ENCODE measurements at regions of chr12 and their contacts with region 1.

Region 1: GRCh38 chr12:124347716-124348357 is 52.9 kb downstream of the RFLNA start:
- DNase-seq: peak in 1 of 2 experiments; percentile 74
- H3K4me3 ChIP-seq: no peak overlapping the region
- H3K27ac ChIP-seq: no peak overlapping the region
- H3K4me1 ChIP-seq: no peaks in the 10 kb centered on the region
- H3K27me3 ChIP-seq: no peaks in the 10 kb centered on the region
- CTCF ChIP-seq: peak in 2 of 3 experiments; percentile 49 to 66; a peak in 2 of 4 replicates
- EP300 ChIP-seq: no peak
- POLR2A ChIP-seq: no peak
- RAD21 ChIP-seq: peak; percentile 47 to 49

Region 2: DNA sequence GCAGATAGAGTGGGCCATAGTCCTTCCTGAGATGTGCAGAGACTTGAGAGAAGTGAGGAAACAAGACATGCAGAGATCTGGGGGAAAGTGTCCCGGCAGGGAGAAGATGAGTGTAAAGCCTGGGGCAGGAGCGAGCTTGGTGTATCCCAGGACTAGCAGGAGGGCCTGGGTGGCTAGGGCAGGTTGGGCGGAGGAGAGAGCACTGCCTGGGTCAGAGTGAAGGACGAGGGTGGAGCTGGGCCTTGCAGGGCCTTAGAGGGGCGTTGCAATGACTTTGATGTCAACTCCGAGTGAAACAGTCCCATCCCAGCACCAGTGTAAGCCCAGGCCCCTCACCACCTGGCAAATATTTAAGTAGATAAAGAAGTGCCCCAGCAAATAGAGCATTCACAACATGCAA is 77.2 kb before region 1 on chr12:
- CTCF ChIA-PET with region 1: no interaction called
- POLR2A ChIA-PET with region 1: no interaction called
- DNase-seq: no peak
- H3K4me3 ChIP-seq: no peak overlapping the region
- H3K27ac ChIP-seq: no peak overlapping the region
- H3K4me1 ChIP-seq: 0 out of 7 replicates have a peak, but pooled peaks cover 0 to 3% (median 0%) of the 10 kb centered on the region in 4 experiments
- H3K27me3 ChIP-seq: no peaks in the 10 kb centered on the region
- CTCF ChIP-seq: no peak
- EP300 ChIP-seq: no peak
- POLR2A ChIP-seq: no peak
- RAD21 ChIP-seq: no peak

Region 3: DNA sequence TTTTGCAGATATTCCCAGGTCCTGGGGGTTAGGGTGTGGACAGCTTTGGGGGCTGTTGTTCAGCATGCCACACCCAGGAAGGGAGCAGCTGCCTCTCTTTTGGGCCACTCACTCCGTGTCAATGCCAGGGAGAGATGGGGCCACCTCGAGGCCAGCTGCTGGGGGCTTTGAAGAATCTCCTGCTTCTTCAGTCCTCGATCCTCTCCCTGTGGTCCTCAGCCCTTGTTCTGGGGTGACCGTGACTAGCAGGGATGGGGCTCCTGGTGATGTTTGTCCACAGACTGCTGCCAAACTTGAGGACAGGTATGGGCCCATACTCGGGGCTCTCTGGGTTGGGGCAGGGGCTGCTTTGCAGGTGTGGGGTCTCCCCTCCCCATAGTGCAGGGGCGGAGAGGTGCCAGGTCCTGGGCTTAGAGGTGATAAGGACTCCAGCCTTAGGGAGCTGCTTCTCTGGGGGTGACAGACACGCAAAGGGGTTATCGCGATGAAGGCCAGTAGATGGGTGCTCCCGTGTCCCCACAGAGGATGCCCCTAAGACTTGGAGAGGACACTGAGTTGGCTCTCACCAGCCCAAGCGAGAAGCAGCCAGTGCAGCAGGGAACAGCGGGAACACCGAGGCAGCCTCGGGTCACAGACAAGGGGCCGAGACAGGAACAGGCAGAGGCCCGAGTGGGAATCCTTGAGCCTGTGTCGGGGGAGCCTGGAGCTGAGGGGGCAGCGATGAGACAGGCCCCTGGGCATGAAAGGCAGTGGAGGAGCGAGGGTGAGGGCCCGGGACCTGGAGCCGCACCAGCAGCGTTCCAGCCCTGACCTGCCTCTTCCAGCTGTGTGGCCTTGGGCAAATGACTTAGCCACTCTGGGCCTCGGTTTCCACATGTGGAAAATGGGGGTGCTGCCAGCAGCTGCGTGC is 41.8 kb before region 1 on chr12:
- CTCF ChIA-PET with region 1: no interaction called
- POLR2A ChIA-PET with region 1: no interaction called
- DNase-seq: no peak
- H3K4me3 ChIP-seq: no peak overlapping the region
- H3K27ac ChIP-seq: no peak overlapping the region
- H3K4me1 ChIP-seq: peaks cover 0 to under 1% (median 0%) of the 10 kb centered on the region in 4 experiments; a peak in 1 of 7 replicates
- H3K27me3 ChIP-seq: no peaks in the 10 kb centered on the region
- CTCF ChIP-seq: no peak
- EP300 ChIP-seq: no peak
- POLR2A ChIP-seq: no peak
- RAD21 ChIP-seq: no peak

Region 4: GRCh38 chr12:124321040-124321481 is 26.8 kb before region 1 on chr12:
- CTCF ChIA-PET with region 1: interaction called, 14 read pairs
- POLR2A ChIA-PET with region 1: interaction called, 3 read pairs
- DNase-seq: peak; percentile 33 to 99
- H3K4me3 ChIP-seq: no peak overlapping the region
- H3K27ac ChIP-seq: no peak overlapping the region
- H3K4me1 ChIP-seq: peaks cover 6 to 21% (median 14%) of the 10 kb centered on the region in 4 experiments
- H3K27me3 ChIP-seq: no peaks in the 10 kb centered on the region; a peak in 1 of 7 replicates
- CTCF ChIP-seq: peak; percentile 92 to 96 (median 95)
- EP300 ChIP-seq: no peak
- POLR2A ChIP-seq: no peak
- RAD21 ChIP-seq: peak; percentile 96 to 97

Region 5: DNA sequence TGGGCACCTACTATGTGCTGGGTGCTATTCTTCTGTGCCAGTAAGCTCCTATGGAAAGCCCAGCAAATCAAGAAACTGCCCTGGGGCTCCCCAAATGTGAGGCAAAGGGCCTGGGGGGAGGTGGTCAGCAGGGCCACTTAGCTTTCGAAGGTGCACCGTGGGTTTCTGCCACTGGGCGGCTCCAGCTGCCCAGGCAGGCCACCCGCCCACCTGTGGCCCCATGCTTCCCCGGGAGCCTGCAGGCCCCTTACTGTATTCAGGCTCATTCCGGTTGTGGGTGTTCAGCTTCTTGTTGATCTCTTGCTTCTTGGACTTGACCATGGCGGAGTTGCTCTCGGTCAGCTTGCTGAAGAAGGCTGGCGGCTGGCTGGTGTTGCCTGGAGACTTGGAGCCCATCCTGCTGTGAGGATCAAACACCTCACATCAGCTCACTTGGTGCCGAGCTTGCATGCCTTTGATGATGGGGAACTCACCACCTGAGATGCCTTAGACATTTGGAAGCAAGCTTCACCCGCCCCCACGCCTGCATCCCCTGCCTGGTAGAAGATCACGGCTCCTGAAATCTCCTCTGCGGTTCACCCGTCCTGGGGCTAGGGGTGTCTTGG is 15.7 kb before region 1 on chr12:
- CTCF ChIA-PET with region 1: interaction called, 11 read pairs
- POLR2A ChIA-PET with region 1: no interaction called
- DNase-seq: no peak
- H3K4me3 ChIP-seq: no peak overlapping the region
- H3K27ac ChIP-seq: 0 out of 2 replicates have a peak overlapping the region, but pooled peaks have one; percentile 4
- H3K4me1 ChIP-seq: peaks cover 0 to 4% (median 0%) of the 10 kb centered on the region in 4 experiments; a peak in 2 of 7 replicates
- H3K27me3 ChIP-seq: no peaks in the 10 kb centered on the region
- CTCF ChIP-seq: peak in 2 of 3 experiments; percentile 51 to 55; a peak in 3 of 4 replicates
- EP300 ChIP-seq: no peak
- POLR2A ChIP-seq: no peak
- RAD21 ChIP-seq: peak; percentile 61 to 70

Region 6: GRCh38 chr12:124388679-124389536 is 41.1 kb after region 1 on chr12:
- CTCF ChIA-PET with region 1: interaction called, 14 read pairs
- POLR2A ChIA-PET with region 1: interaction called, 4 read pairs
- DNase-seq: peak in 1 of 2 experiments; percentile 76
- H3K4me3 ChIP-seq: peak overlapping the region; percentile 38 to 73 (median 54)
- H3K27ac ChIP-seq: no peak overlapping the region
- H3K4me1 ChIP-seq: peaks cover 0 to 25% (median 17%) of the 10 kb centered on the region in 4 experiments; a peak in 6 of 7 replicates
- H3K27me3 ChIP-seq: no peaks in the 10 kb centered on the region
- CTCF ChIP-seq: no peak
- EP300 ChIP-seq: no peak
- POLR2A ChIP-seq: no peak
- RAD21 ChIP-seq: no peak

Measured in H1 (cell line).